IMR-90 (cell line): ENCODE measurements at regions of chr1 and their contacts with region 1.

Region 1: GRCh38 chr1:25520446-25521061 is 22.9 kb upstream of the LDLRAP1 start:
- DNase-seq: peak; percentile 69
- ATAC-seq: peak; percentile 57; the same call in 1 of the 2 replicates
- H3K4me3 ChIP-seq: no peak overlapping the region
- H3K27ac ChIP-seq: no peak overlapping the region
- H3K4me1 ChIP-seq: no peaks in the 10 kb centered on the region; the same call in 1 of the 2 replicates
- H3K27me3 ChIP-seq: peaks cover 20% of the 10 kb centered on the region
- CTCF ChIP-seq: peak; percentile 79
- POLR2A ChIP-seq: no peak
- RAD21 ChIP-seq: peak; percentile 72

Region 2: GRCh38 chr1:25239681-25240541 is 280.6 kb before region 1 on chr1:
- CTCF ChIA-PET with region 1: no interaction called
- POLR2A ChIA-PET with region 1: no interaction called
- dilution Hi-C with region 1: no loop called
- in situ Hi-C with region 1: no loop called
- intact Hi-C with region 1: loop called (anchors 5 kb)
- DNase-seq: peak; percentile 87
- ATAC-seq: peak; percentile 90
- H3K4me3 ChIP-seq: peak overlapping the region; percentile 56
- H3K27ac ChIP-seq: peak overlapping the region; percentile 87
- H3K4me1 ChIP-seq: peaks cover 4% of the 10 kb centered on the region; the same call in 1 of the 2 replicates
- H3K27me3 ChIP-seq: no peaks in the 10 kb centered on the region
- CTCF ChIP-seq: peak; percentile 71
- POLR2A ChIP-seq: peak; percentile 59
- RAD21 ChIP-seq: peak; percentile 70

Region 3: GRCh38 chr1:25425098-25426085 is 95.2 kb before region 1 on chr1:
- CTCF ChIA-PET with region 1: interaction called, 3 read pairs
- POLR2A ChIA-PET with region 1: no interaction called
- dilution Hi-C with region 1: no loop called
- in situ Hi-C with region 1: loop called (anchors 25 kb)
- intact Hi-C with region 1: loop called (anchors 5 kb)
- DNase-seq: peak; percentile 33
- ATAC-seq: no peak
- H3K4me3 ChIP-seq: no peak overlapping the region
- H3K27ac ChIP-seq: no peak overlapping the region
- H3K4me1 ChIP-seq: no peaks in the 10 kb centered on the region
- H3K27me3 ChIP-seq: peaks cover 4% of the 10 kb centered on the region; the same call in 1 of the 2 replicates
- CTCF ChIP-seq: no peak
- POLR2A ChIP-seq: no peak
- RAD21 ChIP-seq: no peak

Region 4: GRCh38 chr1:25430666-25431505 is 89.7 kb before region 1 on chr1 and contains the start of gene MACO1:
- CTCF ChIA-PET with region 1: interaction called, 3 read pairs
- POLR2A ChIA-PET with region 1: no interaction called
- dilution Hi-C with region 1: no loop called
- in situ Hi-C with region 1: no loop called
- intact Hi-C with region 1: loop called (anchors 5 kb)
- DNase-seq: peak; percentile 94
- ATAC-seq: peak; percentile 94
- H3K4me3 ChIP-seq: peak within 1 kb of the TSS; percentile 90
- H3K27ac ChIP-seq: peak within 1 kb of the TSS; percentile 75
- H3K4me1 ChIP-seq: peaks cover 8% of the 10 kb centered on the region
- H3K27me3 ChIP-seq: no peaks in the 10 kb centered on the region
- CTCF ChIP-seq: no peak
- POLR2A ChIP-seq: no peak
- RAD21 ChIP-seq: no peak
- total RNA-seq, gene MACO1: 12.7 and 18.1 TPM in 2 replicates

Region 5: DNA sequence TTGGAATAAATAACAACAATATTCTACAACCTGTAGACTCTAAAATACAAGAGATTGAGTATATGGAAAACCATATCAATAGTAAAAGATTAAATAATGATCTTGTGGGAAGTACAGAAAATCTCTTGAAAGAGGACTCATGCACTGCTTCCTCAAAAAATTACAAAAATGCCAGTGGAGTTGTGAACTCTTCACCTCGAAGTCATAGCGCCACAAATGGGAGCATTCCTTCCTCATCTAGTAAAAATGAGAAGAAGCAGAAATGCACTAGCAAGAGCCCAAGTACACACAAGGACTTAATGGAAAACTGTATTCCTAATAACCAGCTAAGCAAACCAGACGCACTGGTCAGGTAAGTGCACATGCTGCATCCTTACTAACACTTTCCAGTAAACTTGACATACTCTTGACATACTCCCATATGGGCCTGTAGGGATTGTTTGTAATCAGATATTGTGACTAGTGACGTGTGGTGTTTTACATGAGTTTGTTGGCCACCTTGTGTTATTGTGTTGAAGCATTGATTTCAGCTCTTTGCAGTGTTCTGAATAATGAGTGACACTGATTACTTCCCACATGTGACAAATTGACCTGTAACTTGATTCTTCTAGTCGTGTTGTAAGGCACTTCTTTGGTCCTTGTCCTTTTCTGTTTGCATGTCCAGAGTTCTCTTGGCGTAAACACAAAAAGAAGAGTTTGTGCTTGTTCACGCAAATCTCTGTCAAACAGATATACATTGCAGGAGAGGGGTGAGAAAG is 61.8 kb before region 1 on chr1:
- CTCF ChIA-PET with region 1: no interaction called
- POLR2A ChIA-PET with region 1: no interaction called
- dilution Hi-C with region 1: no loop called
- in situ Hi-C with region 1: no loop called
- intact Hi-C with region 1: no loop called
- DNase-seq: peak; percentile 48
- ATAC-seq: no peak
- H3K4me3 ChIP-seq: no peak overlapping the region
- H3K27ac ChIP-seq: no peak overlapping the region
- H3K4me1 ChIP-seq: peaks cover 3% of the 10 kb centered on the region
- H3K27me3 ChIP-seq: no peaks in the 10 kb centered on the region
- CTCF ChIP-seq: no peak
- POLR2A ChIP-seq: no peak
- RAD21 ChIP-seq: no peak

Region 6: DNA sequence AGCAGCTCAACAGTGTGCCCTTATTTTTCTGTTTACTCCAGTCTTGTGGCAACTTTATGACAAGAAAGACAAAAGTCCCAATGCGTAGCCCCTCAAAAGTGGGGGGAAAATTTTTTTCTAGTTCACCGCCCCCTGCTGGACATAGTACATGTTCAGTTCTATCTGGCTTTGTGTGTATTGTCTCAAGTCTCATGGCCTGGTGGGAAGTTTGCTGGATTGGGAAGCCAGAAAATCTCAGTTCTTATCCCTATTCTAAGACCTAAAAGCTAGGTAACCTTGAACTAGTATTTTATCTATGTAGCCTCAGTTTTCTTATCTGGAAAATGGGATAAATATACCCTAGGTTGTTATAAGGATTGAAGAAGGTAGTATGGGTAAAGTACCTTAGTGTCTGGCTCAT is 32.9 kb before region 1 on chr1:
- CTCF ChIA-PET with region 1: no interaction called
- POLR2A ChIA-PET with region 1: no interaction called
- dilution Hi-C with region 1: no loop called
- in situ Hi-C with region 1: no loop called
- intact Hi-C with region 1: loop called (anchors 1 kb)
- DNase-seq: no peak
- ATAC-seq: no peak
- H3K4me3 ChIP-seq: no peak overlapping the region
- H3K27ac ChIP-seq: no peak overlapping the region
- H3K4me1 ChIP-seq: no peaks in the 10 kb centered on the region
- H3K27me3 ChIP-seq: no peaks in the 10 kb centered on the region
- CTCF ChIP-seq: 0 out of 2 replicates have a peak, but pooled peaks have one; percentile 19
- POLR2A ChIP-seq: no peak
- RAD21 ChIP-seq: no peak

Region 7: GRCh38 chr1:27179379-27179778 is 1658.8 kb after region 1 on chr1:
- CTCF ChIA-PET with region 1: no interaction called
- POLR2A ChIA-PET with region 1: no interaction called
- dilution Hi-C with region 1: no loop called
- in situ Hi-C with region 1: no loop called
- intact Hi-C with region 1: no loop called
- DNase-seq: no peak
- ATAC-seq: no peak
- H3K4me3 ChIP-seq: no peak overlapping the region
- H3K27ac ChIP-seq: no peak overlapping the region
- H3K4me1 ChIP-seq: no peaks in the 10 kb centered on the region
- H3K27me3 ChIP-seq: no peaks in the 10 kb centered on the region
- CTCF ChIP-seq: no peak
- POLR2A ChIP-seq: no peak
- RAD21 ChIP-seq: no peak